Esophagus muscularis mucosa (tissue), 4 donors: ENCODE measurements at regions of chr1 and their contacts with region 1.

Region 1: DNA sequence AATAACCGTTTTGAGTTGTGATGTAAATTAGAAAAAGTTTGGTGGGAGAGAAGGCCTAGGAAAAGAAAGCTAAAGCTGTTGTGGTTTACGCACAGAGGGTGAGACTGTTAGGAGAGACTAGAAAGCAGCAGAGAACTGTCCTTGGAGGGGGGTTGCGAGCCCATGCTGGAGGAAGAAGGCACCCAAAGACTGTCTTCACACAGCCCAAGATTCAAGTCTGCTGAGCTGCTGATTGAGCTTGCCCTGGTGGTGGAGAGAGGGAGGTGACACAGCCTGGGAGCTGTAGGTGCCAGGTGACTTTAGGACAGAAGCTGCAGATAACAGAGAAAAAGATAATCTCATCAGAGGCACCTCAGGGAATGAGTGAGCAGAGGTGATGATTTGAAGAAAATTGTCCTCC is 18.3 kb upstream of the TLR5 start:
- DNase-seq: no peak
- H3K4me3 ChIP-seq: no peak overlapping the region
- H3K27ac ChIP-seq: no peak overlapping the region
- H3K4me1 ChIP-seq: no peaks in the 10 kb centered on the region
- H3K27me3 ChIP-seq: no peaks in the 10 kb centered on the region
- CTCF ChIP-seq: no peak
- EP300 ChIP-seq: no peak
- POLR2A ChIP-seq: no peak

Region 2: GRCh38 chr1:223062177-223062576 is 99.1 kb before region 1 on chr1:
- intact Hi-C with region 1: no loop called
- DNase-seq: no peak
- H3K4me3 ChIP-seq: no peak overlapping the region
- H3K27ac ChIP-seq: no peak overlapping the region
- H3K4me1 ChIP-seq: peaks cover 0 to 7% (median 6%) of the 10 kb centered on the region in 4 donors
- H3K27me3 ChIP-seq: no peaks in the 10 kb centered on the region
- CTCF ChIP-seq: no peak
- EP300 ChIP-seq: no peak
- POLR2A ChIP-seq: no peak

Region 3: GRCh38 chr1:223207293-223208066 is 46.2 kb after region 1 on chr1:
- intact Hi-C with region 1: no loop called
- DNase-seq: no peak
- H3K4me3 ChIP-seq: no peak overlapping the region
- H3K27ac ChIP-seq: no peak overlapping the region
- H3K4me1 ChIP-seq: peaks cover 0 to 4% (median 0%) of the 10 kb centered on the region in 4 donors
- H3K27me3 ChIP-seq: peaks cover 0 to 17% (median 0%) of the 10 kb centered on the region in 4 donors
- CTCF ChIP-seq: no peak
- EP300 ChIP-seq: no peak
- POLR2A ChIP-seq: no peak

Region 4: GRCh38 chr1:223224465-223224864 is 63.1 kb after region 1 on chr1:
- intact Hi-C with region 1: loop called (anchors 10 kb)
- DNase-seq: no peak
- H3K4me3 ChIP-seq: no peak overlapping the region
- H3K27ac ChIP-seq: no peak overlapping the region
- H3K4me1 ChIP-seq: no peaks in the 10 kb centered on the region
- H3K27me3 ChIP-seq: no peaks in the 10 kb centered on the region
- CTCF ChIP-seq: no peak
- EP300 ChIP-seq: no peak
- POLR2A ChIP-seq: no peak